A673 (cell line): ENCODE measurements at regions of chr17 and their contacts with region 1.

Region 1: GRCh38 chr17:62656446-62656845 is 29.0 kb downstream of the MRC2 start:
- DNase-seq: no peak
- H3K4me3 ChIP-seq: no peak overlapping the region
- H3K27ac ChIP-seq: no peak overlapping the region
- H3K4me1 ChIP-seq: peaks cover 16% of the 10 kb centered on the region
- H3K27me3 ChIP-seq: no peaks in the 10 kb centered on the region
- CTCF ChIP-seq: no peak

Region 2: GRCh38 chr17:61399131-61400057 is 1257.1 kb before region 1 on chr17 and contains the start of gene TBX2:
- CTCF ChIA-PET with region 1: no interaction called
- POLR2A ChIA-PET with region 1: no interaction called
- intact Hi-C with region 1: no loop called
- DNase-seq: no peak
- H3K4me3 ChIP-seq: peak within 1 kb of the TSS; percentile 31
- H3K27ac ChIP-seq: no peak within 1 kb of the TSS
- H3K4me1 ChIP-seq: peaks cover 31% of the 10 kb centered on the region
- H3K27me3 ChIP-seq: peaks cover 94% of the 10 kb centered on the region
- CTCF ChIP-seq: no peak
- total RNA-seq, gene TBX2: not detected in 2 replicates

Region 3: GRCh38 chr17:62631936-62632924 is 24.2 kb before region 1 on chr17:
- CTCF ChIA-PET with region 1: interaction called, 11 read pairs
- POLR2A ChIA-PET with region 1: no interaction called
- intact Hi-C with region 1: no loop called
- DNase-seq: no peak
- H3K4me3 ChIP-seq: no peak overlapping the region
- H3K27ac ChIP-seq: peak overlapping the region; percentile 78
- H3K4me1 ChIP-seq: peaks cover 36% of the 10 kb centered on the region
- H3K27me3 ChIP-seq: no peaks in the 10 kb centered on the region
- CTCF ChIP-seq: no peak